Psoas muscle (tissue), 8 donors: ENCODE measurements at regions of chr1 and their contacts with region 1.

Region 1: GRCh38 chr1:44049839-44050238 is 18.6 kb upstream of the SLC6A9 start:
- DNase-seq: no peak
- ATAC-seq: no peak
- H3K4me3 ChIP-seq: no peak overlapping the region
- H3K27ac ChIP-seq: no peak overlapping the region
- H3K4me1 ChIP-seq: no peaks in the 10 kb centered on the region
- H3K27me3 ChIP-seq: no peaks in the 10 kb centered on the region
- CTCF ChIP-seq: no peak

Region 2: DNA sequence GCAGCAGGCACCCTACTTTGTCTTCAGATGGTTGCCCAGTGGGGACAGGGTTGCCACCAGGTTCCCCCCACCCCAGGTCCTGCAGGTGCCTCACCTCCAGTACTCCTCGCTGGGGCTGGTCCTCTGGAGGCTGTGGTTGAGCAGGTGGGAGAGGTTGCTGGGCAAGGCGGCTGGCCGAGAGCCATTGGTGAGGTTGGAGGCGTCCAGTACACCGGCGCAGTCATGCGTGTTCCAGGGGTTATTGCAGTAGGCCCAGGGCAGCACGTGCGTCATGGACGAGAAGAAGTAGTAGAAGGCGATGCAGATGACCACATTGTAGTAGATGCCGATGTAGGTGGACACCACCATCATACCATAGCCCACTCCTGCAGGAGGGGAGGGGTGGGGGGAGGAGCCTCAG is 41.6 kb before region 1 on chr1:
- intact Hi-C with region 1: loop called (anchors 2 to 5 kb)
- DNase-seq: no peak
- ATAC-seq: no peak
- H3K4me3 ChIP-seq: no peak overlapping the region
- H3K27ac ChIP-seq: no peak overlapping the region
- H3K4me1 ChIP-seq: peaks cover 4% of the 10 kb centered on the region
- H3K27me3 ChIP-seq: no peaks in the 10 kb centered on the region
- CTCF ChIP-seq: no peak

Region 3: DNA sequence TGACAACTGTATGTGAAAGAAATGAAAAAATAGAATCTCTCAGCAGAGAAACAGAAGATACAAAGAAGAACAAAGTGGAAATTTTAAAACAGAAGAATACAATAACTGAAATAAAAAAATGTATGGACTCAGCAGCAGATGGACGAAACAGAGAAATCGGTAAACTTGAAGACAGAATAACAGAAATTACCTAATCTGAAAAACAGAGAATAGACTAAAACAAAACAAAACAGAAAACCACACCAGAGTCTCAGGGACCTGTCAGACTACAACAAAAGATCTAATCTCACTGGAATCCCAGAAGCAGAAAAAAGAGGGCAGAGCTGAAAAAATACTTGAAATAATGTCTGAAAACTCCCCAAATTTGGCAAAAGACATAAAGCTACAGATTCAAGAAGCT is 1073.5 kb after region 1 on chr1:
- intact Hi-C with region 1: no loop called
- DNase-seq: no peak
- ATAC-seq: no peak
- H3K4me3 ChIP-seq: no peak overlapping the region
- H3K27ac ChIP-seq: no peak overlapping the region
- H3K4me1 ChIP-seq: no peaks in the 10 kb centered on the region
- H3K27me3 ChIP-seq: no peaks in the 10 kb centered on the region
- CTCF ChIP-seq: no peak